GM10248 (cell line): ENCODE measurements at regions of chr18 and their contacts with region 1.

Region 1: DNA sequence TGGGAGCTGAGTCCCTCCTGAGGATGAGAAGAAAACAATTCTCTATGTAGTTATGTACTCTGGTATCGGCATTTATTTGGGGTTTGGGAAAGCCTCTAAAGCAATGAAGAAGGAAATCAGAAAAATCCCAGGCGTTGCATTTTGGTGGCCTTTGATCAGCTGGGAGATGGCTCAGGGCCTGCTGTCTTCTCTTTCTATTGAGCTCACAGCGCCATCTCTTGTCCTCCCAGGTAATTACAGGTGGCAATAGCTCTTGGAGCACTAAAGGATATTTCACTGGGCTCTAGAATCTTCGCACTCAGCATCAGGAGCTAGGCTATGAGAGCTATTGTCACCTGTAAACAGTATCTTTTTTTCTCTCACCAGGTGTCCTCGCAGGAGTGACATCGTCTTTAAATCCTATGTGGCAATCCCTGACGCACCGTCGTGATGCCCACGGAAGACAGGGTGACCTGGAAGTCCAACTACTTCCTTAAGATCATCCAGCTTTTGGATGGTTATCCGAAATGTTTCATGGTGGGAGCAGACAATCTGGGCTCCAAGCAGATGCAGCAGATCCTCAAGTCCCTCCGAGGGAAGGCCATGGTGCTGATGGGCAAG is 76.1 kb upstream of the PMAIP1 start:
- DNase-seq: peak; percentile 53
- CTCF ChIP-seq: peak; percentile 85

Region 2: GRCh38 chr18:59459369-59460079 is 364.2 kb before region 1 on chr18:
- CTCF ChIA-PET with region 1: interaction called, 158 read pairs
- POLR2A ChIA-PET with region 1: no interaction called
- DNase-seq: peak; percentile 40
- CTCF ChIP-seq: peak; percentile 54

Region 3: DNA sequence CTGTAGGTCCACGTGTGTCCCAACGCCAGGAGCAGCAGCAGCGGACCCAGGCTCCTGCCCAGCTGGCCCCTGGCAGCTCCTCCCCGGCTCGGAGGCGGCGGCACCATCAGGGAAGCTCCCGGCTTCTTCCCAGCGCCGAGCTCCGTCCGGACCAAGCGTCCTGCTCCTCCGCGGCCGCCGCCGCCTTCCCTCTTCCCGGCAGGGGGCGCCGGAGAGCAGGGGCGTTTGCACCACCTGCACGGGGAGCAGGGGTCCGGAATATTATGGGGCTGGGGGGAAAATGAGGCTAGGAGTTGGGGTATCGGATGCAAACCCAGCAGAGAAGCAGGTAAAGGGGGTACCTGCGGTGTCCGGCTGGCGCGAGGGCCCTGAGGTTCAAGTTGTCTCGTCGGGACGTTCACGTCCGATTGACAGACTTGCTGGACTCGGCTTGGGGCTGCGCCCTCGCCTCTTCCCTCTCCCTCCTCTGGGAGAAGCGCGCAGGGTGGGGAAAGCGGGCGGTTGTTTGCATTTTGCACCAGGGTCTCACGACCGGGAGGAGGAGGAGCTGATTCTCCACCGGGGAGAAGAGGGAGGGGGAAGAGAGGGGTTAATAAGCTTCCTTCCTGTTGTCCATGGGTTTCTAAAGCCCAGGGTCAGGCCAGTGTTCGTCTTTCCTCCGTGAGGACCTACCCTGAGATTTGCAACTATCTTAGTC is 126.3 kb before region 1 on chr18 and contains the start of gene CCBE1:
- CTCF ChIA-PET with region 1: interaction called, 16 read pairs
- POLR2A ChIA-PET with region 1: interaction called, 3 read pairs
- DNase-seq: peak; percentile 77
- CTCF ChIP-seq: peak; percentile 62

Region 4: GRCh38 chr18:59787998-59788790 is 35.5 kb before region 1 on chr18:
- CTCF ChIA-PET with region 1: interaction called, 68 read pairs
- POLR2A ChIA-PET with region 1: no interaction called
- DNase-seq: no peak
- CTCF ChIP-seq: no peak